CD14-positive monocyte (primary cell): ENCODE measurements at regions of chr7 and their contacts with region 1.

Region 1: DNA sequence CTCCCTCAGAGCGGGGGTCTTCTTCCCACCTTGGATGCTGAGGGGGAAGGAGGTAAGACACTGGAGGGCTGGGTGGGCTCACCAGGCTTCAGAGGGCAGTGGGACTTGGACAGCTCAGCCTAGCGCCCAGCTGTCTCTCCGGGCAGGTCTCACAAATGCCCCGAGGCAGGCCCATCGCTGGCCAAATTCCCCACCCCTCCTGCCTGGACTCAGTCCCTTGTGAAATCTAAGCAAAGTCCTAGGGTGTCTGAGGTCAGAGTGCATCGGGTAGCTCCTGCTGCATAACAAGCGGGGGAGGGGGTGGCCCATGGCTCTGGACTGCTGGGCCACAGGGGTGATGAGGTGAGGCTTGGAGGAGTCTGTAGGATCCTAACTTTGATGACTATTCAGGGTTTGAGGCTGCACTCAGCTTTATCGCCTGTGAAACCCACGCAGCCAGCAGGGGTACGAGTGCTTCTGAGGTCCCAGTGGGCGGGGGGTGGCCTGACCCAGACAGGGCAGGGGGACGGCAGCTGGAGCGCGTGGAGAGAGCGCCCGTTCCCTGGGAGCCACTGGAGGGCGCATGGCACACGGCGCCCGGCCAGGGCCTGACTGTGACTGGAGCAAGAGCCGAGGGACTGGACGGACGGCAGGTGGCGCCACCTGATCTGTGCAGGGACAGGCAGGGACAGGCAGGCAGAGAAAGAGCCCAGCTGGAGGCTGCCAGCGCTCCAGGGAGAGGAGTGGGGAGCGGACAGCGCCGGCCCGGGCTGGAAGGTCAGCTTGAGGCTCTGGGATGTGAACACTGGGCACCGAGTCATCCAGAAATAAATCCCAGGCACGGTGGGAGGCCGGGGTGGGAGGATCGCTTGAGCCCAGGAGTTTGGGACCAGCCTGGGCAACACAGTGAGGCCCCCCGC is 10.0 kb downstream of the CYP2W1 start:
- DNase-seq: peak; percentile 91 to 95 (median 92)
- H3K4me3 ChIP-seq: no peak overlapping the region
- H3K4me3 Mint-ChIP-seq: no peak overlapping the region
- H3K27ac ChIP-seq: no peak overlapping the region
- H3K27ac Mint-ChIP-seq: no peak overlapping the region
- H3K4me1 ChIP-seq: peaks cover 5 to 10% of the 10 kb centered on the region in 2 donors
- H3K4me1 Mint-ChIP-seq: peaks cover 7% of the 10 kb centered on the region
- H3K27me3 ChIP-seq: peaks cover 0 to 8% of the 10 kb centered on the region in 2 donors
- H3K27me3 Mint-ChIP-seq: peaks cover 7 to 30% (median 10%) of the 10 kb centered on the region in 3 donors
- CTCF ChIP-seq: peak; percentile 99

Region 2: GRCh38 chr7:1175967-1176851 is 183.3 kb after region 1 on chr7:
- intact Hi-C with region 1: loop called in 1 of 2 experiments (anchors 5 kb)
- DNase-seq: peak; percentile 65 to 69 (median 66)
- H3K4me3 ChIP-seq: peak overlapping the region in 2 of 3 experiments; percentile 18 to 54
- H3K4me3 Mint-ChIP-seq: peak overlapping the region; percentile 59 to 84
- H3K27ac ChIP-seq: peak overlapping the region in 1 of 2 donors; percentile 10
- H3K27ac Mint-ChIP-seq: peak overlapping the region in 3 of 7 donors; percentile 30 to 75 (median 46)
- H3K4me1 ChIP-seq: peaks cover 9 to 10% of the 10 kb centered on the region in 2 donors
- H3K4me1 Mint-ChIP-seq: peaks cover 14% of the 10 kb centered on the region
- H3K27me3 ChIP-seq: no peaks in the 10 kb centered on the region
- H3K27me3 Mint-ChIP-seq: peaks cover 3 to 12% (median 6%) of the 10 kb centered on the region in 3 donors
- CTCF ChIP-seq: peak; percentile 95